Heart left ventricle (tissue), 16 donors: ENCODE measurements at regions of chr11 and their contacts with region 1.

Region 1: DNA sequence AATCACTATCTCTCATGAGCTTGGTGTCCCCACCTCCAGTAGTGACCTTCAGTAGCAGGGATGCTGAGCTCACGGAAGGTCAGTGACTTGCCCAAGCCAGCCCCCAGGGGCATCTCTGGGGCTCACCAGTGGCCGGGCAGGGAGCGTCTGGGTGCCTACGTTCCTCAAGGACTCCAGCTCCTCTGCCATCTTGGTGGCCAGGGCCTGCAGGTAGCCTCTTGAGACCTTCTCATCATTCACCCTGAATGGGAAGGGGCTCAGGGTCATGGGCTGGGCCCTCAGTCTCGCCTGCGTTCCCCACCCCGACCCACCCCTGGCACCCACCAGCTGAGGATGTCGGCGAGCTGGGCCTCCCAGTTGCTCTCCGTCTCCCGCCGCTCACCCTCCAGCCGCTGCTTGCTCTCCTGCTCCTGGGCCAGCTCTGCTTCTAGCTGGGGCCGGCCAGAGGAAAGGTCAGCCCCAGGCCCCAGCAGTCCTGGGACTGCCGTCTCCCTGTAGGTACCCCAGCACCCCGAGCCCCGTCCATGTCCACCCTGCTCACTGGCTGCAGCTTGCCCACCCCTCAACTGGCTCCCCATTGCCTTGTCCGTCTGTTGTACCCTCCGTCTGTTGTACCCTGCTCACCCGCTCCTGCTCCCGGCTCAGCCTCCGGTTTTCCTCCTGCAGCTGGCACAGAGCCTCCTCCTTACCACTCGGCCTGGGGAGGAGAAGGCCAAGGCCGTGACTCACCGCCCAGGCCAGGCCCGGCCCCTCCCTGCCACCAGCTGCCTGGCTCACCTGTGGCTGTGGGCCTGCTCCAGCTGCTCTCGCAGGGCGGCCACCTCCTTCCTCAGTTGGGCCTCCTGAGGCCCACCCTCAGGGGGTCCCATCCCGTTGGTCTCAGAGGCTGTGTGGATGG is 9.5 kb downstream of the CDC42BPG start:
- DNase-seq: no peak
- ATAC-seq: peak in 1 of 4 donors; percentile 15
- H3K4me3 ChIP-seq: no peak overlapping the region
- H3K27ac ChIP-seq: no peak overlapping the region
- H3K4me1 ChIP-seq: no peaks in the 10 kb centered on the region
- H3K27me3 ChIP-seq: no peaks in the 10 kb centered on the region
- CTCF ChIP-seq: no peak
- POLR2A ChIP-seq: no peak

Region 2: GRCh38 chr11:64905516-64906313 is 70.7 kb after region 1 on chr11:
- intact Hi-C with region 1: loop called in 1 of 10 experiments (anchors 5 kb)
- DNase-seq: peak in 1 of 5 donors; percentile 55
- ATAC-seq: no peak
- H3K4me3 ChIP-seq: no peak overlapping the region
- H3K27ac ChIP-seq: no peak overlapping the region
- H3K4me1 ChIP-seq: no peaks in the 10 kb centered on the region
- H3K27me3 ChIP-seq: no peaks in the 10 kb centered on the region
- CTCF ChIP-seq: no peak
- POLR2A ChIP-seq: no peak